ENCODE measurements at regions of chr11 and their contacts with region 1.

Region 1: DNA sequence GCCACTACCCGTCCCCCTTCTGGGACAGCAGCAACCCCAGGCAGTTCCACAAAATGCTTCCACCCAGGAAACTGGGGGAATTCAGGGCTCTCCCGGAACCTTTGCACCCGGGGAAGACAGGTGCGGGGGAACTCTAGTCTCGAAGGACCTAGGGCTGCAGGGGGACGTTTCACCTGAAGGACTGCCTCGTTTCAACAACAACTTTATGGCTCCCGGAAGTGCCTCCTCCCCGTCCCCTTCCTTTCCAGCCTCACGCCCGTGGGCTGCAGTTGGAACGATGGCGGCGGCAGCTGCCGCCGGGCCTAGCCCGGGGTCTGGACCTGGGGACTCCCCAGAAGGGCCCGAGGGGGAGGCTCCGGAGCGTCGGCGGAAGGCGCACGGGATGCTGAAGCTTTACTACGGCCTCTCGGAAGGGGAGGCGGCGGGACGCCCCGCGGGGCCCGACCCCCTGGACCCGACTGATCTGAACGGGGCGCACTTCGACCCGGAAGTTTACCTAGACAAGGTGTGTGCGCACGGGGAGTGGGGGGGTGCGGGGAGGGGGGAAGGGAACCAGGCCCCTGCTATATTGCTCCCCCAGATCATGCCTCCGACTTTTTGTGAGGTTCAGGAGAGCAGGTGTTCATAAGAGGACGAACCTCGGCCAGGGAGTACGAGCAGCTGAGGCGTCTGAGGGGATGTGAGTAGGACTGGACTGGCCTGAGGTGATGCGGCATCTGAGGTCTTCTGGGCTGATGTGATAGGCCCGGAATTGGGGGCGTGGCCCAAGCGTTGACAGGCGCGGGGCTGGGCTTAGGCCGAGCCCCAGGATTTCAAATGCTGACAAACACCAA is at the start of gene VPS51:
- DNase-seq: peak; percentile 91
- ATAC-seq: peak; percentile 98
- H3K4me3 Mint-ChIP-seq: peak within 1 kb of the TSS; percentile 90
- H3K27ac Mint-ChIP-seq: peak within 1 kb of the TSS; percentile 99
- H3K4me1 Mint-ChIP-seq: peaks cover 6% of the 10 kb centered on the region
- H3K27me3 Mint-ChIP-seq: no peaks in the 10 kb centered on the region
- CTCF ChIP-seq: no peak
- total RNA-seq, gene VPS51: 122 to 136 TPM (median 123 TPM) in 3 replicates

Region 2: GRCh38 chr11:65021003-65021402 is 75.2 kb before region 1 on chr11:
- CTCF ChIA-PET with region 1: no interaction called
- POLR2A ChIA-PET with region 1: no interaction called
- DNase-seq: no peak
- ATAC-seq: no peak
- H3K4me3 Mint-ChIP-seq: no peak overlapping the region
- H3K27ac Mint-ChIP-seq: no peak overlapping the region
- H3K4me1 Mint-ChIP-seq: peaks cover 8% of the 10 kb centered on the region
- H3K27me3 Mint-ChIP-seq: no peaks in the 10 kb centered on the region
- CTCF ChIP-seq: no peak

Region 3: DNA sequence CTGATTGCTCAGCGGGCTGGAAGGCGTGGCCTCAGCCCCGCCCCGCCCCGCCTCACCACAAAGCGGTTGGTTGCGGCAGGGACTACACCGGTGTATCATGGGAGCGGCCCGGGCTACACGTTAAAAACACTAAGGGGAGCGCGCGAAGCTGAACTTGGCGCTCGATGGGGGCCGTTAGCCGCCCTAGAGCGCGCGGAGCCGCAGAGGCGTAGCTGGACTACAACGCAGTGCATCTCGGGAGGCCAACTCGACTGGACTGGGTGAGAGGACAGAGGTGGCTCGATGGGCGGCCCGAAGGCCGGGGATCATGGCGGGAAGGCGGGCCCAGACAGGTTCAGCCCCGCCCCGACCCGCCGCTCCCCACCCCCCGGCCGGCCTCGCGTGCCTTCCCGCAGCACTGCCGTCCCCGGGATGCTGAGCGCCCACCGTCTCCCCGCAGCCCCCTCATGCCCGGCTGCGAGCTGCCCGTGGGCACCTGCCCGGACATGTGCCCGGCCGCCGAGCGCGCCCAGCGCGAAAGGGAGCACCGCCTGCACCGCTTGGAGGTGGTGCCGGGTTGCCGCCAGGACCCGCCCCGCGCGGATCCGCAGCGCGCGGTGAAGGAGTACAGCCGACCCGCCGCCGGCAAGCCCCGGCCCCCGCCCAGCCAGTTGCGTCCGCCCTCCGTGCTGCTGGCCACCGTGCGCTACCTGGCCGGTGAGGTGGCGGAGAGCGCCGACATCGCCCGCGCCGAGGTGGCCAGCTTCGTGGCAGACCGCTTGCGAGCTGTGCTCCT is 55.2 kb before region 1 on chr11 and contains the start of gene SAC3D1:
- CTCF ChIA-PET with region 1: no interaction called
- POLR2A ChIA-PET with region 1: interaction called, 10 read pairs
- DNase-seq: peak; percentile 92
- ATAC-seq: peak; percentile 90
- H3K4me3 Mint-ChIP-seq: peak within 1 kb of the TSS; percentile 90
- H3K27ac Mint-ChIP-seq: peak within 1 kb of the TSS; percentile 96
- H3K4me1 Mint-ChIP-seq: peaks cover 9% of the 10 kb centered on the region
- H3K27me3 Mint-ChIP-seq: no peaks in the 10 kb centered on the region
- CTCF ChIP-seq: no peak
- total RNA-seq, gene SAC3D1: 22.2 to 26.2 TPM (median 22.8 TPM) in 3 replicates

Region 4: DNA sequence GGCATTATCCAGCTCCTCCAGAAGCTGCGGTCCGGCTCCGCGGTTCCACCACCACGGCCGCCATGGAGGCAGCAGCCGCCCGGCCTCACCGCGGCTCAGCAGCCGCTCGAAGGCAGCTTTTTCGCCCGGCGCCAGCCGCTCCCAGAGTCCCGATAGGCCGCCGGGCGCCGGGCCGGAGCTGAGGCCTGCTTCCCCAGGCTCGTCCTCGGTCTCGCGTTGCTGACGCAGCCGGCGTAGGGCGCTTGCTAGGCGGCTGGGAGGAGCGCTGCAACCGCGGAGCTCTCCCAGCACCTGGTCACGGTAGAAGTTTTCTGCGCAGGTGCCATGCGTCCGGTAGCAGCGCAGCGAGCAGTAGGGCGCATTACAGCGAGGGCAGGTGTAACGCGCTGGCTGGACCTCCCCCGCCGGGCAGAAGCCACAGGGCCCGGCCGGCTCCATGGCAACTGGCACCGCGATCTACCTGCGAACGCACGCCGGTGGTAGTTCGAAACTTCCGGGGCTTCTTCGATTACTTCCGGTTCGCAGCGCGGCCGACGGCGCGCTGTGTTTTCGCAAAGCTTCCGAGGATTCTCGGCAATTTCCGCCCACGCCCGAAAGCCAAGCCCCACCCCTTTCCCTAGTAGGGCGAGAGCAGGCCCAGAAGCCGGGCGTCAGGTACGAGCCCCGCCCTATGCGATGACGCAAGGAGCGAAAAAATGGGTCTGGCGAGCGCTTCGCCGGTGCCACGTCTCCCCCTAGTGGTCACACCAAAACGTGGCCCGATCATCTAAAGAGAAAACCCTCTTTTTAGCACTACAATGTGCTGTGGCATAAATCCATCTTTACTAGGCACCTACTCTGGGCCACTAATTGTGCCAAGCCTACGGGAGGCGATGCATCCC is 21.3 kb after region 1 on chr11 and contains the start of gene ZNHIT2:
- CTCF ChIA-PET with region 1: interaction called, 104 read pairs
- POLR2A ChIA-PET with region 1: interaction called, 10 read pairs
- DNase-seq: peak; percentile 100
- ATAC-seq: peak; percentile 69
- H3K4me3 Mint-ChIP-seq: peak within 1 kb of the TSS; percentile 86
- H3K27ac Mint-ChIP-seq: peak within 1 kb of the TSS; percentile 100
- H3K4me1 Mint-ChIP-seq: peaks cover 22% of the 10 kb centered on the region
- H3K27me3 Mint-ChIP-seq: no peaks in the 10 kb centered on the region
- CTCF ChIP-seq: peak; percentile 91
- total RNA-seq, gene ZNHIT2: 15.9 to 18.3 TPM (median 16.7 TPM) in 3 replicates

Measured in WTC11 (cell line).